Activated CD4-positive, alpha-beta T cell treated with anti-CD3 and anti-CD28 coated beads for 36 hours (primary cell): ENCODE measurements at regions of chr22 and their contacts with region 1.

Region 1: GRCh38 chr22:36065775-36066559 is 37.3 kb upstream of the RBFOX2 start:
- DNase-seq: peak; percentile 85
- ATAC-seq: peak; percentile 85
- H3K4me3 Mint-ChIP-seq: peak overlapping the region; percentile 69
- H3K27ac Mint-ChIP-seq: peak overlapping the region; percentile 91
- H3K4me1 Mint-ChIP-seq: peaks cover 5% of the 10 kb centered on the region
- H3K27me3 Mint-ChIP-seq: no peaks in the 10 kb centered on the region

Region 2: DNA sequence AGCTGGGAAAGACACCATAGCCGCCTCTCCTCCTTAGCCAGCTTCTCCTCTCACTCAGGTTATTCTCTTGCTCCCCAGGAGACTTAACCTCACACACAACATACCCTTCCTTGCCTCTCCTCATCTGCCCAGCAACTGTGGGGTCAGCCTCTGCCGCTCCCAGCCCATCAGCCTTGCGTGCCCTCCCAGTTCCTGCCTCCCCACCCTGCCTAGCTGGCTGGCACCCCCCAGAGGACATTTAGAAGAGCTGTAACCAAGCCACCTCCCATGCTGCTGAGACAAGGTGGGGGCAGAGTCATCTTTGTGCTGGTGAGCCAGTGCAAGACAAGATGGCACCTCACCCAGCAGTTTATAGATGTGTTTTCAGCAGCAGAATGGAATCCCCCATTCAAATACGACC is 728.0 kb before region 1 on chr22:
- CTCF ChIA-PET with region 1: no interaction called
- POLR2A ChIA-PET with region 1: no interaction called
- intact Hi-C with region 1: no loop called
- DNase-seq: peak; percentile 37
- ATAC-seq: no peak
- H3K4me3 Mint-ChIP-seq: no peak overlapping the region
- H3K27ac Mint-ChIP-seq: peak overlapping the region; percentile 37
- H3K4me1 Mint-ChIP-seq: peaks cover 14% of the 10 kb centered on the region
- H3K27me3 Mint-ChIP-seq: no peaks in the 10 kb centered on the region

Region 3: DNA sequence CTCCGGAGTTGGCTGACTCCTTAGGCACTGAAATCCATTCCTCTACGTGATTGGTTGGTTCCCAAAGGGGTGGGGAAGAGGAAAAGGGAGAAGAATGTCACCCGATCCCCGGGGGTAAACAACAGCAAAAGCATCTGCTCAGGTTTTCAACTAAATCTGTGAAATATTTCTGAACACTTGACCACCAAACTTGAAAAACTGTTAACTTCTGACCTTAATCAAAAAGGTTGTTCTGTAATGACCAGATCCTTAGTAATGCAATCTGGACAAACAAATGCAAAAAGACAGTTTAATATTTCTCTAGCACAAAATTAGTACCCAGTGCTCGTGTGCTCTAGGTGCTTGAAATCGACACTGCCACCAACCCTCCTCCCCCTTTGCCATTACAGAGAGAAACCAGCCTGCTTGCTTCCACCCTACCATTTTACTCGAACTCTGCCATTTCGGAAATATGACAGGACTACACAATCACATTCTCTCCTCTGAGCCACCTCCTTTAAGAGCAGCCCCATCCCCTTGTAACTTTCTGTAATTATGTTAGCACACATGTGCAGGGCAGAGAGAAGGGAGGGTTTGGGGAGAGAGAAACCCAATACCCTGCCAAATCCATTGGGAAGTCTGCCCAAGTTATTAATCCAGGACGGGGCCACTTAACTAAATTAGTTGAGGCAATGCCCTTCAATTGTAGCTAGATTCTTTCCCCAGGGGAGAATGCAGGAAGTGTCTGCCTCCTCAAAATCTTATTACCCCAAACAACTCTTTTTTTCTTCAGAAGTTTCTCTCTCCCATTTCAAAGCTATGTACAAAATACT is 151.1 kb before region 1 on chr22:
- CTCF ChIA-PET with region 1: interaction called, 13 read pairs
- POLR2A ChIA-PET with region 1: no interaction called
- intact Hi-C with region 1: no loop called
- DNase-seq: no peak
- ATAC-seq: peak; percentile 51
- H3K4me3 Mint-ChIP-seq: peak overlapping the region; percentile 38
- H3K27ac Mint-ChIP-seq: peak overlapping the region; percentile 24
- H3K4me1 Mint-ChIP-seq: peaks cover 17% of the 10 kb centered on the region
- H3K27me3 Mint-ChIP-seq: peaks cover 2% of the 10 kb centered on the region

Region 4: GRCh38 chr22:35978889-35979288 is 87.1 kb before region 1 on chr22:
- CTCF ChIA-PET with region 1: interaction called, 11 read pairs
- POLR2A ChIA-PET with region 1: no interaction called
- intact Hi-C with region 1: no loop called
- DNase-seq: no peak
- ATAC-seq: no peak
- H3K4me3 Mint-ChIP-seq: no peak overlapping the region
- H3K27ac Mint-ChIP-seq: no peak overlapping the region
- H3K4me1 Mint-ChIP-seq: peaks cover 2% of the 10 kb centered on the region
- H3K27me3 Mint-ChIP-seq: peaks cover 1% of the 10 kb centered on the region

Region 5: DNA sequence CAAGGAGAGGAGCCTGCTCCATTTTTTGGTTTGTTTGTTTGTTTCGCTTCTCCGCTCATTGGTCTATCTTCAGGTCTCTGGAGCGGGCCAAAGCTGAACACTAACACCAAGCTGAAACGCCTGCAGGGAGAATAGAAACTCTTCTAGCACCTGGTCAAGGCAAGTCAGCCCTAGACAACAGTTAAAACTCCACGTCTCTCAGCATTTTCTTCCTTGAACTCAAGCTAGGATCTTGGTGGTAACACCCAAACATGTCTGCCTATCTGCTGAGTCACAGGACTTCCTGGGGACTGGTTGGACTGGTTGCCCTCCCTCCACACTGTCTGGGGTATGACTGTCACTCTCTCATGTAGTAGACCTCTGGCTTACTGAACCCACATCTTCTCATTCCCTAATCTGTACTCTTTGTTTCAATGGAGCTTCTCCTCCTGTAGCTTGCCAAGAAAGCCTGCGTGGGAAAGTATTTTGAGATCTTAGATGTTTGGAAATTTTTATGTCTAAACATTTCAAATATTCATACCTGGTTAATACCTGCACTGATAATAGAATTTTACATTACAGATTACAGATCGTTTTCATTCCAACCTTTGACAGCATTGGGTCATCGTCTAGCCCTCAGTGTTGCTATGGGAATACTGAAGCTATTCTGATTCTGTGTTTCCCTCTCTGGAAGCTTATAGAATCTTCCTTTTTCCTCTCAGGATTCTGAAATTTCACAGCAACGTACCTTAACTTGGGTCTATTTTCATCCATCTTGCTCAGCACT is 13.3 kb before region 1 on chr22:
- CTCF ChIA-PET with region 1: interaction called, 63 read pairs
- POLR2A ChIA-PET with region 1: no interaction called
- intact Hi-C with region 1: no loop called
- DNase-seq: peak; percentile 24
- ATAC-seq: peak; percentile 97
- H3K4me3 Mint-ChIP-seq: no peak overlapping the region
- H3K27ac Mint-ChIP-seq: no peak overlapping the region
- H3K4me1 Mint-ChIP-seq: peaks cover 7% of the 10 kb centered on the region
- H3K27me3 Mint-ChIP-seq: peaks cover 8% of the 10 kb centered on the region

Region 6: DNA sequence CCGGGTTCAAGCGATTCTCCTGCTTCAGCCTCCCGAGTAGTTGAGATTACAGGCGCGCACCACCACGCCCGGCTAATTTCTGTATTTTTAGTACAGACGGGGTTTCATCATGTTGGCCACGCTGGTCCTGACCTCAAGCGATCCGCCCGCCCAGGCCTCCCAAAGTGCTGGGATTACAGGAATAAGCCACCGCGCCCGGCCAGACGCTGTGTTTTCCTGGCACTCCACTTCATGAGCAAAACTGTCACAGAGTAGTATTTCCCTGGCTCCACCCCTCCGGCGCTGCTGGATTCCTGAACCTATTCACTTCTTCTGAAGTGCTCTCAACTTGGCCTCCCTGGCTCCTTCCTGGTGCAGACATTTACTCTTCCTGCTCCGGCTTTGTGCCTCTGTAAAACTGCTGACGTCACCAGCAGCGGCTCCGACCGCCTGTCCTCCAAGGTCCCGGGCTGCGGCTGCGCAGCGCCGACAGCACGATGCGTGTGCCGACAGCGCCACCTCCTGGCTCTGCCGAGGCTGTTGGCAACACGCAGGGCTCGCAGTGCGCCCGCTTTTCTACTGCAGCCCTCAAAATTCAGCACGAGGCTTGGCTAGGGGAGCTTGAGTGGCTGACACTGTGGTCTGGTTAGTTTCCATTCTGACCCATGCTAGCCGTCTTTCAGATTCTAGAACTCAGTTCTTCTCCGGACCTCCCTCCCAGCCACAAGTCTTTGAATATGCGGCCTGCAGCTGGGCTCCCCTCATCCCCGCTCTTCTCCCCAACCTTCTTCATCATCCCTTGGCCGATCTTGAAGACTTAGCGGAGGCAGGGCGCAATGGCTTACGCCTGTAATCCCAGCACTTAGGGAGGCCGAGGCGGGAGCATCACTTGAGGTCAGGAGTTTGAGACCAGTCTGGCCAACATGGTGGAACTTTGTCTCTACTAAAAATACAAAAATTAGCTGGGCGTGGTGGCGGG is 58.0 kb after region 1 on chr22:
- CTCF ChIA-PET with region 1: interaction called, 8 read pairs
- POLR2A ChIA-PET with region 1: no interaction called
- intact Hi-C with region 1: loop called (anchors 1 to 5 kb)
- DNase-seq: peak; percentile 97
- ATAC-seq: peak; percentile 99
- H3K4me3 Mint-ChIP-seq: peak overlapping the region; percentile 62
- H3K27ac Mint-ChIP-seq: peak overlapping the region; percentile 83
- H3K4me1 Mint-ChIP-seq: peaks cover 10% of the 10 kb centered on the region
- H3K27me3 Mint-ChIP-seq: no peaks in the 10 kb centered on the region

Region 7: GRCh38 chr22:36234919-36235318 is 169.0 kb after region 1 on chr22:
- CTCF ChIA-PET with region 1: no interaction called
- POLR2A ChIA-PET with region 1: no interaction called
- intact Hi-C with region 1: no loop called
- DNase-seq: no peak
- ATAC-seq: no peak
- H3K4me3 Mint-ChIP-seq: no peak overlapping the region
- H3K27ac Mint-ChIP-seq: no peak overlapping the region
- H3K4me1 Mint-ChIP-seq: peaks cover 49% of the 10 kb centered on the region
- H3K27me3 Mint-ChIP-seq: no peaks in the 10 kb centered on the region